ENCODE measurements at regions of chr2 and their contacts with region 1.

Region 1: DNA sequence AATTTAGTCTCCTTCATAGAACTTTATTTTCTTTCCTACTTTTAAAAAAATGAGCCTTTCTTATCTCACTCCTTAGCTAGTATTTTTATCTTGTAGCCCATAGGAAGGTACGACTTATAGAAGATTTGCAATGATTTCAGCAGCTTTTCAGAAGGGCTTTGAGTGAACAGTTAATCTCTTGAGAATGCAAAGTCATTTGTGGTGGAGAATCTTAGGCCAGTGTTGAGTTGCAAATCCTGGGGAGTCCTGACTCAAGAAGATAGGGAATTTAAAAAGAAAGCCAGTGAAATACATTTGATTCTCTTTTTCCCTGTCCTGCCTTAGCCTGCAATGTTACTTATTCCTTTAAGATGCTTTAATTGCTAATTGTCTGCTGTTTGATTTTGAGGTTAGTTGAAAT is 33.6 kb downstream of the LYPD6 start:
- DNase-seq: no peak
- H3K4me3 ChIP-seq: no peak overlapping the region
- H3K27ac ChIP-seq: no peak overlapping the region
- H3K4me1 ChIP-seq: no peaks in the 10 kb centered on the region
- H3K27me3 ChIP-seq: no peaks in the 10 kb centered on the region
- CTCF ChIP-seq: no peak

Region 2: DNA sequence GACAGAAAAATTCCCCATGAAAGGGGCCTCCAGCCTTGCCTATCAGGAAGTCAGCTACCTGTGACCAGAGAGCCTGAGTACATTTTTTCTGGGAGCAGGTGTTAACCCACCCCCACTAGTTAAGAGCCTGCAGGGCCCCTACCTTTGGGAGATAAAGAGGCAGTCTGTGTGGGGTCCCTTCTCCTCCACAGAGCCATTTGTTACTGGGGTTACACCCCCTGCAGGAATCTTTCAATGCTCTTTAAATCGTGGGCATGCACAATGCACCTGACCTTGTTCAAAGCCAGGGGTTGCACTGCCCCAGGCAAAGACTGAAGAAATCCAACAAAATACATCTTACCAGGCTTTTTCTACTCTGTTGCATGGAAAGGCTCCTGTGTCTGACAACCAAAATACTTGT is 49.3 kb before region 1 on chr2:
- intact Hi-C with region 1: loop called (anchors 1 kb)
- DNase-seq: no peak
- H3K4me3 ChIP-seq: no peak overlapping the region
- H3K27ac ChIP-seq: no peak overlapping the region
- H3K4me1 ChIP-seq: peaks cover 0 to 11% (median 3%) of the 10 kb centered on the region in 4 donors
- H3K27me3 ChIP-seq: peaks cover 0 to 22% of the 10 kb centered on the region in 2 donors
- CTCF ChIP-seq: no peak

Measured in tibial artery (tissue), 4 donors.